ENCODE measurements at regions of chr2 and their contacts with region 1.

Region 1: GRCh38 chr2:101577173-101577572 is 102.3 kb upstream of the RFX8 start:
- DNase-seq: no peak
- ATAC-seq: no peak
- H3K4me3 ChIP-seq: no peak overlapping the region
- H3K4me3 Mint-ChIP-seq: no peak overlapping the region
- H3K27ac ChIP-seq: no peak overlapping the region
- H3K27ac Mint-ChIP-seq: no peak overlapping the region
- H3K4me1 ChIP-seq: no peaks in the 10 kb centered on the region
- H3K4me1 Mint-ChIP-seq: peaks cover 46% of the 10 kb centered on the region
- H3K27me3 ChIP-seq: no peaks in the 10 kb centered on the region
- H3K27me3 Mint-ChIP-seq: no peaks in the 10 kb centered on the region
- CTCF ChIP-seq: no peak

Region 2: DNA sequence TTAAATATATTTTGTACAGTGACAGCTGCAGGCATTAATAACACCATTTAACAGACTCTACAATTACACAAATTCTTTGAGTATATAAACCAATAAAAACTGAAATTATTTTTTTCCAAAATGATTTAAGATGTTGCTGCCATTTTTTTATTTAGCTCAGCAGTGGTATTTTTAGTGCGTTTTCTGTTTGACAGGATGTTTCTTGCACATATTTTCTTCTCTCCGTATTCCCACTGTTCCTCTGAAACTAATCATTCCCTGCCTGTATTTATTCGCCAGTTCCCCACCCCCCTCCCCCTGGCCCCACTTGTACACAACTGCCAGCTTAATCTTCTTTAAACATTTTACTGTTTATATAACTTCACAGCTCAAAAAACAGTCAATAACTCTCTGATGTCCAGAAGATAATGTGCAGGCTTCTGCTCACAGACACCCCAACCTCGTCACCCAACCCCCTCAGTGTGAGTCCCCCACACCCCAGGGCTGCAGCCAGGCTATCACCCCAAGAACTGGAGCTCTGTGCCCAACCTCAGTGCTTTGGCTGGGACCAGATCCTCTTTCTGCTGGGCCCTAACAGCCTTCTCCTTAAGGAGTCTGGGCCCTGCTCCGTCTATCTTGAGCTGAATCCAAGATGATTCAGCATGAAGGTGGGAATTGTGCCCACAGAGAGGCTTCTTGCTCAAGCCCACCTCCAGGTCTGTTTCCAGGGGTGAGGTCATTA is 78.7 kb after region 1 on chr2:
- CTCF ChIA-PET with region 1: no interaction called
- POLR2A ChIA-PET with region 1: no interaction called
- intact Hi-C with region 1: loop called in 1 of 2 experiments (anchors 10 kb)
- DNase-seq: no peak
- ATAC-seq: no peak
- H3K4me3 ChIP-seq: no peak overlapping the region
- H3K4me3 Mint-ChIP-seq: no peak overlapping the region
- H3K27ac ChIP-seq: no peak overlapping the region
- H3K27ac Mint-ChIP-seq: no peak overlapping the region
- H3K4me1 ChIP-seq: peaks cover 17% of the 10 kb centered on the region
- H3K4me1 Mint-ChIP-seq: peaks cover 8% of the 10 kb centered on the region
- H3K27me3 ChIP-seq: no peaks in the 10 kb centered on the region
- H3K27me3 Mint-ChIP-seq: no peaks in the 10 kb centered on the region
- CTCF ChIP-seq: no peak

Region 3: GRCh38 chr2:101688261-101688660 is 111.1 kb after region 1 on chr2:
- CTCF ChIA-PET with region 1: no interaction called
- POLR2A ChIA-PET with region 1: no interaction called
- intact Hi-C with region 1: loop called in 1 of 2 experiments (anchors 5 kb)
- DNase-seq: no peak
- ATAC-seq: no peak
- H3K4me3 ChIP-seq: no peak overlapping the region
- H3K4me3 Mint-ChIP-seq: no peak overlapping the region
- H3K27ac ChIP-seq: no peak overlapping the region
- H3K27ac Mint-ChIP-seq: no peak overlapping the region
- H3K4me1 ChIP-seq: peaks cover 12% of the 10 kb centered on the region
- H3K4me1 Mint-ChIP-seq: peaks cover 16% of the 10 kb centered on the region
- H3K27me3 ChIP-seq: no peaks in the 10 kb centered on the region
- H3K27me3 Mint-ChIP-seq: no peaks in the 10 kb centered on the region
- CTCF ChIP-seq: no peak

Region 4: DNA sequence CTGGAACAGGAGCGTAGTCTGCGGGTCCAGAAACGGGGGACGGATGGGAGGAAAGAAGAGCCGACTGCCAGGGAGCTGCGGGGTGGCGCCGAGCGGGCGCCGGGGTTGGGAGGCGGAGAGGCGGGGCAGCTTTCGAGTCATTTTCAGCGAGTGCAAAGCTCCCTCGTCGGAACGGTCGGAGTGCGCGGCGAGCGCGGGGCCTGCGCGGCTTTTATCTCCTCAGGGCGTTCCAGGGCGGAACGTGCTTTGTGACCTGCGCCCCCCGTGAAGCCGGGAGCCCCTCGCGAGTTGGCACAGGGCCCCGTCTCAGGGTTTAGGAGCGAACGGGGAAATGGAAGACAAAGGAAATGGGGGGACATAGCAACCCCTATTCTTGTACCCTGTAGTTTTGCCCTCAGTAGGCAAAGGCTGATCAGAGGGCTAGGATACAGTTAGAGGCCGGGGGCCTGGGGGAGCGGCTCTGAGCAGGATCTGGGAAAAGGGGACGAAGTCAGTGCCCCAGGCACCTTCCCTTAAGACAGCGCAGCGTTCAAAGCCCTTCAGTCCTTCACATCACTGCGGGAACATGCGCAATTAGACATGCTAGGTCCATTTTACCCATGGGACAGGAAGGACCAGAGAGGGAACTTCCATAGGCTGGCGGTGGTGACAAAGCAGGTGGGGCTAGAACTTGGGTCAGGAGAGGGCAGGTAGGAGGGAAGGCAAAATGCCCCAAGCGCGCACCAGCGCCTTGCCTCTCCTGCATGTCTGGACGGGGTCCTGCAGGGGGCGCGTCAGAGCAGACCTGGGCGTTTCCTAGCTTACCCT is 674.1 kb after region 1 on chr2:
- CTCF ChIA-PET with region 1: no interaction called
- POLR2A ChIA-PET with region 1: no interaction called
- intact Hi-C with region 1: no loop called
- DNase-seq: peak; percentile 48 to 84 (median 62)
- ATAC-seq: peak; percentile 87
- H3K4me3 ChIP-seq: peak overlapping the region; percentile 60
- H3K4me3 Mint-ChIP-seq: peak overlapping the region; percentile 96
- H3K27ac ChIP-seq: no peak overlapping the region
- H3K27ac Mint-ChIP-seq: peak overlapping the region; percentile 12
- H3K4me1 ChIP-seq: peaks cover 19% of the 10 kb centered on the region
- H3K4me1 Mint-ChIP-seq: peaks cover 23% of the 10 kb centered on the region
- H3K27me3 ChIP-seq: no peaks in the 10 kb centered on the region
- H3K27me3 Mint-ChIP-seq: no peaks in the 10 kb centered on the region
- CTCF ChIP-seq: peak; percentile 90

Measured in CD4-positive, alpha-beta T cell (primary cell).